ENCODE measurements at regions of chr3 and their contacts with region 1.

Region 1: GRCh38 chr3:185959609-185960517 is 22.0 kb upstream of the TRA2B start:
- DNase-seq: no peak
- ATAC-seq: peak; percentile 61
- H3K4me3 Mint-ChIP-seq: no peak overlapping the region
- H3K27ac Mint-ChIP-seq: no peak overlapping the region
- H3K4me1 Mint-ChIP-seq: peaks cover 1% of the 10 kb centered on the region
- H3K27me3 Mint-ChIP-seq: no peaks in the 10 kb centered on the region

Region 2: DNA sequence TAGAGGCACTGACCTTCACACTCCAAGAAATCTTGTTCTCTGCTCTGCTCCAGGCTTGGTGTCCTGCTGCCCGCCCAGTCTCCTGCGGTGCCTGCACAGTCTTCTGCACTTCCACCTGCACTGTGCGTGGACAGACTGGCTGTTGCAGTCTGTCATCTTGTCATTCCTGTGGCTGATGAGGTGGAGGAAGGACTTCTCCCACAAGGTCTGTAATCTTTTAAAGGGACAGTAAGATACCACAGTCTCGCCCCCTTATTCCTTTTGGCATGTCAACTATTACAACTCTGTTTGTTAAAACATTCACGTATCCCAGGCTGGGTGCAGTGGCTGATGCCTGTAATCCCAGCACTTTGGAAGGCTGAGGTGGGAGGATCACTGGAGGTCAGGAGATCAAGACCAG is 80.9 kb before region 1 on chr3:
- CTCF ChIA-PET with region 1: no interaction called
- POLR2A ChIA-PET with region 1: no interaction called
- intact Hi-C with region 1: no loop called
- DNase-seq: no peak
- ATAC-seq: no peak
- H3K4me3 Mint-ChIP-seq: no peak overlapping the region
- H3K27ac Mint-ChIP-seq: no peak overlapping the region
- H3K4me1 Mint-ChIP-seq: no peaks in the 10 kb centered on the region
- H3K27me3 Mint-ChIP-seq: peaks cover 4% of the 10 kb centered on the region

Region 3: DNA sequence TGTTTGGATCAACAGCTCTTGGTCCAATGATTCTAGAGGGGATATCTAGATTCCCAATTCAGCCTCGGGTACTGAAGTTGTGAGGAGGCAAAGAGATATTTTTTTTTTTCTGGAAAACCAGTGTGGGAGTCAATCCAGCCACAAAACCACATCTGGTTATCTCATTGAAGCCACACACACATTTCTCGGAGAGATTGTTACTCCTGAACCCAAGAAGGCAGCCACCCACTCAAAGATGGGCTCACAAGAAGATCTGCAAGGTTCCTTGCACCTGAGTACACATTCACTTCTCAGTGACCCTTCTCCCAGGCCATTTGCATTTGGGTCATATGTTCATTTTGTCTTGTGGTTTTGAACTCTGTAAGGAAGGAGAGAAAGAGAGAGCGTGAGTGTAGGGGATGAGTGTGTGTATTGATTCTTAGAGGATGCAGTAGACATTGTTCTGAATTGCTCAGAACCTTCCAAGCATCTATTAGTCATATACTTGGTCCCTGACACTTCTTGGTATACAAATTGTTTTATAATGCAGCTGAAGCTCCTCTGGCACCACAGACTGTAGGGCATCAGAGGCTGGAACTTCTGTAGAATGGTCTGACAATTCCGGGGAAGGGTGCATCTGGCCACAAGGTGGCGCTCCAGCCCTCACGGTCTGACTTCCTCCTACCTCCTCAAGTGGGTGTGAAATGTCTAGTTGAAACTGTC is 17.3 kb after region 1 on chr3:
- CTCF ChIA-PET with region 1: interaction called, 12 read pairs
- POLR2A ChIA-PET with region 1: interaction called, 3 read pairs
- intact Hi-C with region 1: loop called in 1 of 2 experiments (anchors 2 kb)
- DNase-seq: peak; percentile 93
- ATAC-seq: peak; percentile 91
- H3K4me3 Mint-ChIP-seq: no peak overlapping the region
- H3K27ac Mint-ChIP-seq: peak overlapping the region; percentile 11
- H3K4me1 Mint-ChIP-seq: peaks cover 18% of the 10 kb centered on the region
- H3K27me3 Mint-ChIP-seq: no peaks in the 10 kb centered on the region

Measured in activated CD4-positive, alpha-beta T cell treated with anti-CD3 and anti-CD28 coated beads for 36 hours (primary cell).